ENCODE measurements at regions of chr2 and their contacts with region 1.

Region 1: DNA sequence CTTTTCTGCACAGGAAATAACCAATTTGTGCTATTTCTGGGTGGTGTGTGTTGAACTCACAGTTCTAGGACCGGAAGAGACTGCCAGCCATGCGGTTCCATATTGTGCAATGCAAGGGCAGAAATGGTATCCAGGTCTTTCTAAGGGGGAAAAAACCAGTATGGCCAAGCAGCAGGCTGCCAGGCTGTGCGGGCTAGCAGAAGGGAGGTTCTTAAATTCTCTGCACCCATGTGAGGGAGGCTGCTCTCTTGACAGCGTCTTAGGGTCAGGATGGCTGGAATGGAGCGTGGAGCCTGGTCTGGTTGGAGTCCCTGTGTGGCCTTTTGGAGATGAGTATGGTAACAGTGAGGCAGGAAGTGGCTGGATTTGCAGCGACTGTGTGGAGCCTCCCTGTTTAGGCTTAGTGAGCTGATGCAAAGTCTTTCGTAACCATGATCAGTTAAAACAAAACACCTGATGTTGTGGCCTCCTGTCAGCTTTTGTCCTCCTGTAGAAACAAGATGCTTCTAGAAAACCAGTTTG is 52.6 kb downstream of the NCK2 start:
- DNase-seq: no peak
- H3K4me3 Mint-ChIP-seq: peak overlapping the region; percentile 77
- H3K27ac Mint-ChIP-seq: peak overlapping the region; percentile 97
- H3K4me1 Mint-ChIP-seq: peaks cover 89% of the 10 kb centered on the region
- H3K27me3 Mint-ChIP-seq: no peaks in the 10 kb centered on the region

Region 2: DNA sequence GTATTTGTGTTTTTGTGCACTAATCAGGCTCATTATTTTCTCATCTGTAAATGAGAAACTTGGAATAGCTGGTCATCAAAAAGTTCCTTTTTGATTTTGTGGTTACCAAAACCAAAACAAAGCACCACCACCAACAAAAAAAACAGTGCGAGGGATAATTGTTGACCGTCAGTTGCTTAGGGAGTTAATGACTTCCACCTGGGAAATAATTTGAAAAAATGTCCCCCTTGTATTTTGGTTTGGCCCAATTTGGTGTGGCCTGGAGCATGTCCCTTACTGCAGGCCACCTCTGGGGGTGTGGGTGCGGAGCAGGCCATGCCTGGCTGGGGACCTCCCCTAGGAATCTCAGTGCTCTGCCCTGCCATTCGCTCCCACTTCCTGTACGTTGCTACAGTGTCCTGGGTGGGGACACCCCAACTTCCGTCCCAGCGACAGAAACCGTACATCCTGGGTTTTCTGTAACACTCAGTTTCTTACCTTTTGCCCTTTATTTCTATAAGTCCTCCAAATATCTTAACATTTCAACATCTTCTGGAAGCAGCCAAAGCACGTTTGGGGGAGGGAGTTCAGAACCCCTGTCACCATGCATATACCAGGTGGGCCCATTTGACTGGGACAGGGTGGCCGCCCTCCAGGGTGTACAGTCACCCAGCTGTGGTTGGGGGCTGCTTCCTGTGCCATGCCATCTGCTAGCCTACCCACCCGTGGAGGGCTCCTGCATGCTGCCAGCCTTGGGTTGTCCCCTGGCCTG is 21.4 kb before region 1 on chr2:
- intact Hi-C with region 1: loop called (anchors 2 kb)
- DNase-seq: no peak
- H3K4me3 Mint-ChIP-seq: peak overlapping the region; percentile 55
- H3K27ac Mint-ChIP-seq: peak overlapping the region; percentile 81
- H3K4me1 Mint-ChIP-seq: peaks cover 90% of the 10 kb centered on the region
- H3K27me3 Mint-ChIP-seq: no peaks in the 10 kb centered on the region

Region 3: GRCh38 chr2:105809097-105809473 is 11.7 kb after region 1 on chr2:
- intact Hi-C with region 1: loop called (anchors 1 kb)
- DNase-seq: no peak
- H3K4me3 Mint-ChIP-seq: no peak overlapping the region
- H3K27ac Mint-ChIP-seq: peak overlapping the region; percentile 81
- H3K4me1 Mint-ChIP-seq: peaks cover 82% of the 10 kb centered on the region
- H3K27me3 Mint-ChIP-seq: no peaks in the 10 kb centered on the region

Region 4: GRCh38 chr2:105836840-105837692 is 39.7 kb after region 1 on chr2:
- intact Hi-C with region 1: loop called (anchors 1 kb)
- DNase-seq: no peak
- H3K4me3 Mint-ChIP-seq: peak overlapping the region; percentile 44
- H3K27ac Mint-ChIP-seq: peak overlapping the region; percentile 61
- H3K4me1 Mint-ChIP-seq: peaks cover 89% of the 10 kb centered on the region
- H3K27me3 Mint-ChIP-seq: no peaks in the 10 kb centered on the region

Region 5: GRCh38 chr2:105873721-105874120 is 76.4 kb after region 1 on chr2:
- intact Hi-C with region 1: loop called (anchors 1 kb)
- DNase-seq: peak; percentile 44
- H3K4me3 Mint-ChIP-seq: peak overlapping the region; percentile 61
- H3K27ac Mint-ChIP-seq: peak overlapping the region; percentile 89
- H3K4me1 Mint-ChIP-seq: peaks cover 87% of the 10 kb centered on the region
- H3K27me3 Mint-ChIP-seq: no peaks in the 10 kb centered on the region

Region 6: DNA sequence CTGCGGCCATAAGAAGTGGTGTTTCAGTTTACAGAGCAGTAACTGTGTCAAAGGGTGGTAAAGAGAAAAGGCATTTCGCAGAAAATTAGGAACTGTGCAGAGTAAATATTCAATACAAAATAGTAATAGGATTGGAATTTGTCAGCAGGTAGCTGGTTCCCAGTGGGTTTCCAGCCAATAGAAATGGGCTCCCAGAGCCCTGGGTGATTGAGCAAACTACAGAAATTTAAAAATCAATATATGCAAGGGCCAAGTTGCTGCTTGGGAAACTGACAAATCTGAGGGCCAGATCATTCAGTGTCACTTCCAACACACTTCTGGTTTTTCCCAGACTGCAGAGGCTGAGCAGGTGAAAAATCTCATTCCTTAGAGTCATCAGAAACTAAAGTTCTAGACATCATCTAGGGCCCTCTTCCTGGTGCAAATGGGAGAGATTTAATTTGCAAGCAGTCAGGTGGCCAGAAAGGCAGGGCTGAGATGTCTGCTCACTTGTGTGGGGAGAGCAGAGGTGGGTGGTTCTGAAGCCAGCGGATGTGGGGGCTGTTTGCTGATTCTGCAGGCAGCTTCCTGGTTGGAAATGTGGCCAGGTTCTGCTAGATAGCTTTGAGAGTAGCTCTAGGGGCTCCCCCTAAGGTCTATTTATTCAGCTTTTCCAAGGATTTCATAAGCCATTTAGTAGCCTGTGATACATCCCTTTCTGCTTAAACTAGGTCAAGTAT is 129.8 kb after region 1 on chr2:
- intact Hi-C with region 1: loop called (anchors 2 kb)
- DNase-seq: peak; percentile 49
- H3K4me3 Mint-ChIP-seq: peak overlapping the region; percentile 23
- H3K27ac Mint-ChIP-seq: peak overlapping the region; percentile 85
- H3K4me1 Mint-ChIP-seq: peaks cover 44% of the 10 kb centered on the region
- H3K27me3 Mint-ChIP-seq: no peaks in the 10 kb centered on the region

Measured in activated T-helper 1 cell treated with anti-CD3 and anti-CD28 coated beads, Interleukin-12 subunit alpha, Interleukin-12 subunit beta, Interleukin-2, Interleukin-4 antibody, amounts not matched to agents 30 ng/mL and 10 ng/mL and 1 ng/mL, durations not matched to agents 14 hours and 24 hours and 36 hours (primary cell).